ENCODE measurements at regions of chr1 and their contacts with region 1.

Region 1: DNA sequence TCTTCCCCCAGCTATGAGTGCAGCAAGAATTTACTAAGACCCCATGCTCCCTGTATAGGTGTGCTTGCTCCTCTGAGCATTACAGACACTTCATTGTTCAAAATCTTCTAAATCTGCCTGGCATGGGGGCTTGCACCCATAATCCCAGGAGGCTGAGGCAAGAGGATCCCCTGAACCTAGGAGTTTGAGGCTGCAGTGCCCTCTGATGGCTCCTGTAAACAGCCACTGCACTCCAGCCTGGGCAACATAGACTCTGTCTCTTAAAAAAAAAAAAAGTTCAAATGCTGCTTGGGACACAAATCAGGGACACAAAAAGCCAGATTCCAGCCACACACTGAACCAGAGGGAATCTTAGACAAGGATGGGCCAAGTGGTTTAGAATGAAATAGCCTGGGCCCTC is 3.4 kb upstream of the ACOT7 start:
- DNase-seq: no peak
- H3K4me3 ChIP-seq: no peak overlapping the region
- H3K27ac ChIP-seq: no peak overlapping the region
- H3K4me1 ChIP-seq: peaks cover 11 to 31% (median 12%) of the 10 kb centered on the region in 3 donors
- H3K27me3 ChIP-seq: no peaks in the 10 kb centered on the region
- CTCF ChIP-seq: peak in 1 of 6 experiments; percentile 24
- POLR2A ChIP-seq: no peak

Region 2: DNA sequence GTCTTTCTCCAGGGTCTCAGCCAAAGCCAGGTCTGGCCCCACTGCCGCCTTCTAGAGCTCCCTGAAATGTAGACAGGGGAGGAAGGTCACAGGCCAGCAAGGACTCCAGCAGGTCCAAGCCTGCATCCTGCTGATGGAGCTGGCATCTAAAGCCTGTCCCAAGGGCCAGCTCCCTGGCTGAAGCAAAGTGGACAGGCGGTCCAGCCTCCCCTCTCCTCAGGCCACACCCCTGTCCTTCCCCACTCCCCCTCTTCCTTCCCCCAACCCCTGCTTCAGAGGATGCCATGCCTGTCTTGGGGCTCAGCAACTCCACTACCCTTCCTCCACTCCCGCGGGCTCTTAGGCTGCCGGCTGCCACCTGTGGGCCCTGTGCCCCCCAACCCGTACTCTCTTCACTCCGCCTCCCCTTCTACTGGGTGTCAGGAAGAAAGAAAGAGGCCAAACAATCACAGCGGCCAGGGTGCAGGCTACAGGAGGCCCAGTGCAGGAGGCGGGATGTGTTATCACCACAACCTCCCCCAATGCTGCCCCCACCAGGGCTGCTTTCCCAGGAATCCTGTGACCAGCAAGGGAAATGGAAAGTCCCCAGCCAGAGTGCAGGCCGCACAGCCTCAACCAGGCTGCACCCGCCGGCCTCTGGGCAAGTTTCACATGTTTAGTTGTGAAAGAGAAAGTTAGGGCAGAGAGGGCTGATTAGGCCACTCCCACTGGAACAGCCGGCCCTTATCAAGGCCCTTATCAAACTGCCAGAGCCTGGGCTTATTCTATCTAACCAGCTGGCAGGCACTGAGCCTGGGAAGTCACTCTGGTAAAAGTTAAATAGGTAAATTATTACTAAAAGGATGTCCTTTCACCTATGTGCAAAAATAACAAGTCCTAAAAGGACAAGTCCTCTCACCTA is 37.5 kb before region 1 on chr1:
- intact Hi-C with region 1: loop called (anchors 5 kb)
- DNase-seq: no peak
- H3K4me3 ChIP-seq: peak overlapping the region in 2 of 4 donors; percentile 6 to 27
- H3K27ac ChIP-seq: peak overlapping the region; percentile 75 to 94 (median 84)
- H3K4me1 ChIP-seq: peaks cover 45 to 81% (median 51%) of the 10 kb centered on the region in 3 donors
- H3K27me3 ChIP-seq: no peaks in the 10 kb centered on the region
- CTCF ChIP-seq: no peak
- POLR2A ChIP-seq: no peak

Measured in esophagus squamous epithelium (tissue), 5 donors.